Motor neuron (in vitro differentiated cells): ENCODE measurements at regions of chr4 and their contacts with region 1.

Region 1: GRCh38 chr4:15649914-15650545 is 5.1 kb downstream of the FBXL5 start:
- ATAC-seq: peak; percentile 9 to 32 (median 24)
- H3K4me3 ChIP-seq: peak overlapping the region in 1 of 5 donors; percentile 0
- H3K27ac ChIP-seq: no peak overlapping the region
- H3K4me1 ChIP-seq: peaks cover 12 to 38% of the 10 kb centered on the region in 2 donors

Region 2: DNA sequence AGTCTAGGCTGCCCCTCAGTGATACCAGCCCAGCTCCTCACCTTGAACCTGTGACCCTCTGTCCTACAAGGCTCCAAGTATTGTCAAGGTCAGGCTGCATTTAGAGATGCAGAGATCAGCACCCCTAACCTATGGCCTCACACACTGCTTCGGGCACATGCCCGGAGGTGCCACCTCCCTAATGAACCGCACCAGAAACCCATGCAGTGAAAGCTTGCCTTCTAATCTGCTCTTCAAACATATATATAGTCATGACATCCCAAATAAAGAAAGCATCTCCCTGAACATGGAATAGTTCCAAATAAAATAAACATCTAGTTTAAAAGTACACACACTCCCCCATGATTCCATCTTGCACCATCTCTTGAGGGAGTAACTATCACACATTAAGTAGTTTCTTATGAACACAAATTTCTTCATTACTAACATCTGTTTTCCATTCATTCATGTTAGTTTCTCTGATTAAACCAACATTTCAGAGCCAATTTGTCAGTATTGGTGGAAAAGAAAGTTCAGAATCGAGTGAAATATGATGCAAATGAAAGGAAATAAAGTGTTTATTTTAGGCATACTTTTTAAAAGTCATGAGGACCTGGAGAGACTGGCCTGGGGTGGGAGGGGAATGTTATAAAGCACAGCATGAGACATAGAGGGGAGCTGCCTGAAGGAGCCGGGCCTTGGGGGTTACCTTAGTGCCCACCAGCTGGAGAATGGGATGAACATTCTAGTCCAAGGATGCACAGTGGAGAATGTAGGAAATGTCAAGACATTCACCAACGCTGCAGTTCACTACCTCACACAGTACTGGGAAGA is 161.2 kb before region 1 on chr4:
- in situ Hi-C with region 1: loop called in 1 of 9 experiments (anchors 10 kb)
- ATAC-seq: no peak
- H3K4me3 ChIP-seq: no peak overlapping the region
- H3K27ac ChIP-seq: no peak overlapping the region
- H3K4me1 ChIP-seq: no peaks in the 10 kb centered on the region

Region 3: DNA sequence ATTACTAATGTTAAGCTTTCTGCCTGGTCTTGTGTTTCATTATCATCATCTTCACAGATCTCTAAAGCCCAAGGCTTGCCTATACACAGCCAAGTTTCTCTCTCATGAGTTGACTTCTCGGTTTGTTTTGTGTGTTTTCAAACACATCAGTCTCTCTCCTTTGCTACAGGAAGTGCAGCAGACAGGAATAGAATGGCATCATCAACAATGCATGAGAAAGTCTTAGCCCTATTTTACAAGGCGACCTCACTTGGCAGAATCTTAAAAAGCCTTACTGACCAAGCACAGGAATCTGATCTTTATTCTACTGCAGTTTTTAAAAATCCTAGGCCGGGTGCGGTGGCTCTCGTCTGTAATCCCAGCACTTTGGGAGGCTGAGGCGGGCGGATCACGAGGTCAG is 143.6 kb before region 1 on chr4:
- in situ Hi-C with region 1: loop called in 1 of 9 experiments (anchors 25 kb)
- ATAC-seq: peak in 1 of 8 experiments; percentile 36
- H3K4me3 ChIP-seq: no peak overlapping the region
- H3K27ac ChIP-seq: no peak overlapping the region
- H3K4me1 ChIP-seq: no peaks in the 10 kb centered on the region